CD4-positive, alpha-beta T cell (primary cell): ENCODE measurements at regions of chr15 and their contacts with region 1.

Region 1: GRCh38 chr15:60568301-60568742 is 89.4 kb upstream of the ICE2 start:
- DNase-seq: no peak
- ATAC-seq: no peak
- H3K4me3 ChIP-seq: peak overlapping the region; percentile 3
- H3K4me3 Mint-ChIP-seq: peak overlapping the region; percentile 56
- H3K27ac ChIP-seq: peak overlapping the region in 1 of 2 donors; percentile 58
- H3K27ac Mint-ChIP-seq: peak overlapping the region; percentile 84
- H3K4me1 ChIP-seq: peaks cover 76% of the 10 kb centered on the region
- H3K4me1 Mint-ChIP-seq: peaks cover 95% of the 10 kb centered on the region
- H3K27me3 ChIP-seq: no peaks in the 10 kb centered on the region
- H3K27me3 Mint-ChIP-seq: no peaks in the 10 kb centered on the region
- CTCF ChIP-seq: no peak

Region 2: DNA sequence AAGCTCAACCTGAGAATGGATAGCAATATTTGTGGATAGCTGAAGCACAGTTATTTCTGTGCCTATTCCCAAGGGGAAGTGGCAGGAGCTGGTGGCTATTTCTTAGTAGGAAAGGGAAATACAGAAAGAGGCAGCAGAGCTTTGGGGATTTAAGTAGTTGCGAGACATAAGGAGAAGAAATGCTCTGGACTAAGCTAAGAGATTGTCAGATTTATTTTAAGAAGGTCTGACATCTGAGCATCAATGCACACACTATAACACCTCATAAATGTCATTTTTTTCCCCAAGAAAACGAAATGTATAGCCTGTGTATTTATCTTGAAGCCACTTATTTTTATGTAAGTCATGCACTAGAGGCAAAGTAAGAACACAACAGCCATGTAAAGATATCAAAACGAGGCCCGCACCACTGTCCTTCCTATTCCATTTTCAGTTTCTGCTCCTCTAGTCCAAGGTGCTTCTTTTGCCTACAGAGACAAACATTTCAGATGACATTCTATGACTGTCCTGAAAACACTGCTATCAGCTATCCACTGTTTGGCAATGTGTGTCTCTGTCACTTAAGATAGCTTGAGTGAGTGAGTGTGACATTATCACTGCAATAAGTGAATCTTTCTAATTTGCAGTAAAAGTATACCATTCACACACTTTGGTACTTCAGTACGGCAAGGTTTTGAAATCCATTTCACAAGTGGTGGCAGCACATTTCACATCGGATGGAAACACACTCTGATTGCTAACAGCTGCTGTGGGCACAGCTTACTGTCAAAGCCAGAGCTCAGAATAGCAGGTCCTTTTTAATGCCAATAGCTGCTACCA is 26.6 kb before region 1 on chr15:
- CTCF ChIA-PET with region 1: interaction called, 5 read pairs
- POLR2A ChIA-PET with region 1: interaction called, 11 read pairs
- intact Hi-C with region 1: no loop called
- DNase-seq: no peak
- ATAC-seq: no peak
- H3K4me3 ChIP-seq: no peak overlapping the region
- H3K4me3 Mint-ChIP-seq: peak overlapping the region; percentile 57
- H3K27ac ChIP-seq: peak overlapping the region in 1 of 2 donors; percentile 50
- H3K27ac Mint-ChIP-seq: peak overlapping the region; percentile 85
- H3K4me1 ChIP-seq: peaks cover 62% of the 10 kb centered on the region
- H3K4me1 Mint-ChIP-seq: peaks cover 100% of the 10 kb centered on the region
- H3K27me3 ChIP-seq: no peaks in the 10 kb centered on the region
- H3K27me3 Mint-ChIP-seq: no peaks in the 10 kb centered on the region
- CTCF ChIP-seq: no peak

Region 3: DNA sequence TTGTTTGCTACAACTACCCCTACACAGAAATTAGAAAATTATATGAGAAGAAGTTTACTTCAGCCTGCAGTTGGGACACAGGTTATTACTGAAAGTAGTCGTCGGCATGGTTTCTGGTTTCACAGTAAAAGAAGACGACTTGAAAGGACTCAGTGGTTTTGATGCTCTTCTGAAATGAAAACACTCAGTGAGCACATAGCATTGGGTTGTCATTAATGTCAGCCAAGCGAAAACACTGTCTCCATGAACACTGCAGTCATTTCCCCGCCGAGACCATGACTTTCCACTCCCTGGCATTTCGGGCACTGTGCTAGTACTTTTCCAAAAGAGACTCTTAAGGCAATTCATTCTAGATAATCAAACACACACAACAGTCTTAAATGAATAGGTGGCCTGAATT is 20.2 kb before region 1 on chr15:
- CTCF ChIA-PET with region 1: interaction called, 7 read pairs
- POLR2A ChIA-PET with region 1: interaction called, 16 read pairs
- intact Hi-C with region 1: loop called in 1 of 2 experiments (anchors 2 kb)
- DNase-seq: peak in 5 of 14 experiments; percentile 34 to 69 (median 65)
- ATAC-seq: peak; percentile 57
- H3K4me3 ChIP-seq: peak overlapping the region; percentile 27
- H3K4me3 Mint-ChIP-seq: peak overlapping the region; percentile 71
- H3K27ac ChIP-seq: peak overlapping the region; percentile 2 to 65
- H3K27ac Mint-ChIP-seq: peak overlapping the region; percentile 85
- H3K4me1 ChIP-seq: peaks cover 74% of the 10 kb centered on the region
- H3K4me1 Mint-ChIP-seq: peaks cover 94% of the 10 kb centered on the region
- H3K27me3 ChIP-seq: no peaks in the 10 kb centered on the region
- H3K27me3 Mint-ChIP-seq: no peaks in the 10 kb centered on the region
- CTCF ChIP-seq: no peak

Region 4: DNA sequence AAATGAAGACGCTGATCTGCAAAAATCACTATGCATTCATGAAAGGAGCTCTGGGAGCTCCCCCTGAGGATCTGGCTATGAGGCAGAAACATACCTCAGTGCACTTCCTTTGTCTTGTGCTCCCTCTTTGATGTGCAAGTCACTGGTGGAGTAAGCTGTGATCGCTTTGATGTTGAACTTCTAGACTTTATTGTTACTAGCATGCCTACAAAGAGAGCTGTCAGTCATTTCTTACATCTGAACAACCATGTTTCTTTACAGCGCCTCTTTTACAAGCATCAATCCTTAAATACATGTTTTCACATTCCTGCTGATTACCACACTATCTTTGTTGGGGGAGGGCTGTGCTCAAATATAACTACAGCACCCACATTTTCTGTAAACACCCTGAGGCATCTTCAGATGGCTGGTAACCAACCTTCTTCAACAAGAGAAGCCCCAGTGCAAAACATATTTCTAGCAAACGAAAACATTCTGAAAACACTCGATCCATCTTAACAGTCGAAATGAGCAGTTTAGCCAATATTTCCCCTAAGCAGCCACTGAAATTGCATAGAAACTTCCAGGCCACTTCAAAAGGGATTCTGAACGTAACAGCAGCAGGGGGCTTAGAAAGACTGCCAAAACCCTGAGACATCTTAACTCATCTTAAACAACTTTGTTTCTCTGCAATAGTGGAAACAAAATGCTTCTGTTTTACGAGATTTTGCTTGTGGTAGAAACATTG is 12.5 kb after region 1 on chr15:
- CTCF ChIA-PET with region 1: interaction called, 15 read pairs
- POLR2A ChIA-PET with region 1: interaction called, 240 read pairs
- intact Hi-C with region 1: loop called in 1 of 2 experiments (anchors 2 kb)
- DNase-seq: peak in 9 of 14 experiments; percentile 32 to 92 (median 60)
- ATAC-seq: peak; percentile 83
- H3K4me3 ChIP-seq: peak overlapping the region; percentile 10
- H3K4me3 Mint-ChIP-seq: peak overlapping the region; percentile 56
- H3K27ac ChIP-seq: peak overlapping the region; percentile 62 to 76
- H3K27ac Mint-ChIP-seq: peak overlapping the region; percentile 85
- H3K4me1 ChIP-seq: peaks cover 61% of the 10 kb centered on the region
- H3K4me1 Mint-ChIP-seq: peaks cover 90% of the 10 kb centered on the region
- H3K27me3 ChIP-seq: no peaks in the 10 kb centered on the region
- H3K27me3 Mint-ChIP-seq: no peaks in the 10 kb centered on the region
- CTCF ChIP-seq: no peak

Region 5: DNA sequence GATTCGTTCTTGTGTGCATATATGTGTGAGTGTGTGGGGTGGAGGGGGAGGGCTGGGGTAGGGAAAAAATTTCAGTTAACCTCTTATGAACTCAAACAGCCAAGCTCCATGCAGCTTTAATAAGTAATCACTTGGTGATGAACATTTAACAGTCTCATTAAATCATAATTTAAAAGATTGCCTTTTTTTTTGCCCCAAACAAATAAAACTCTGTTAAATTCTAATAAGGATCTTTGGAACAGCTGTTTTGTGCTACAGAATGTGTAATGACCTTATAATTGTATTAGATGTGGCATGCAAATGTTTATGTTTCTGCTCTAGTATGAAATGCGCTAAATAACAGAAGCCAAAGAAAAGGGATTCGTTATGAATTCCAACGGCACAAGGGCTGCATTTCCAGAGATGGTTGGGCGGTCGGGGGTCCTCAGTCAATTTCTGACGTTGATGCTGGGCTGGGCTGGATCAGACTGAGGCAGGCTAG is 740.7 kb after region 1 on chr15:
- CTCF ChIA-PET with region 1: no interaction called
- POLR2A ChIA-PET with region 1: no interaction called
- intact Hi-C with region 1: no loop called
- DNase-seq: no peak
- ATAC-seq: no peak
- H3K4me3 ChIP-seq: no peak overlapping the region
- H3K4me3 Mint-ChIP-seq: no peak overlapping the region
- H3K27ac ChIP-seq: no peak overlapping the region
- H3K27ac Mint-ChIP-seq: no peak overlapping the region
- H3K4me1 ChIP-seq: no peaks in the 10 kb centered on the region
- H3K4me1 Mint-ChIP-seq: no peaks in the 10 kb centered on the region
- H3K27me3 ChIP-seq: no peaks in the 10 kb centered on the region
- H3K27me3 Mint-ChIP-seq: peaks cover 20% of the 10 kb centered on the region
- CTCF ChIP-seq: no peak